Activated CD4-positive, alpha-beta memory T cell treated with anti-CD3 and anti-CD28 coated beads, Interleukin-2, amount 10 ng/mL, durations not matched to agents 7 days and 5 days (primary cell): ENCODE measurements at regions of chr19 and their contacts with region 1.

Region 1: DNA sequence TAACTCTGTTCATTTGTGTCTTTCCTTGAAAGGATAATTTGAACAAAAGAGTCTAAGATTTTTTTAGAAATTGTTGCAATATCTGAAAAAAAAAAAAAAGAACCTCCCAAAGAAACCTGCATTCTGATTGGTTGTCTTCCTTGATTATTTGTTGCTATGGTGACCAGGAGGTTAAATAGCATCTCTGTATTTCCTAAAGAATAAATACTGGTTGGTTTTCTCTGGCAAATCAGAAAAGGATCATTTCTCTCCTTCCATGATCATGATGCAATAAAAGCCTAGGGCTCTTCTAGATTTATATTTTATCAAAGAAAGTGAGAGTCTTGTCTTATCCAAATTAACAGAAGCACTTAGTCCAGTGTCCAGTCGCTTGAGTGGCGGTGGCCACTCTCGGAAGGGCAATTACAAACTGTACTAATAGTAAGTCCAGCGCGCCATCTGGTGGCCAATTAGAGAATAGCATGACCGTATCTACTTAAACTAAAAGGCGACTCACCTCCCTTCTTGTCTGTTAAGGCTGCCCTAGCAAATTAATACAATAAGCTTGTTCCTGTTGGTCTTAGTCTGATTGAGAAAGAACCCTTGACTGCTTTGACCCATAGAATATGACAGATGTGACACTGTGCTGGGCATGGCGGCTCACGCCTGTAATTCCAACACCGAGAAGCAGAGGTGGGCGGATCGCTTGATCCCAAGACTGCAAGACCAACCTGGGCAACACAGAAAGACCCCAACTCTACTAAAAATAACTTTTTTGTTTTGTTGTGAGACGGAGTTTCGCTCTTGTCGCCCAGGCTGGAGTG is 47.0 kb upstream of the PNMA8B start:
- DNase-seq: peak; percentile 82
- H3K4me3 Mint-ChIP-seq: no peak overlapping the region
- H3K27ac Mint-ChIP-seq: no peak overlapping the region
- H3K4me1 Mint-ChIP-seq: peaks cover 4% of the 10 kb centered on the region
- H3K27me3 Mint-ChIP-seq: peaks cover 13% of the 10 kb centered on the region

Region 2: DNA sequence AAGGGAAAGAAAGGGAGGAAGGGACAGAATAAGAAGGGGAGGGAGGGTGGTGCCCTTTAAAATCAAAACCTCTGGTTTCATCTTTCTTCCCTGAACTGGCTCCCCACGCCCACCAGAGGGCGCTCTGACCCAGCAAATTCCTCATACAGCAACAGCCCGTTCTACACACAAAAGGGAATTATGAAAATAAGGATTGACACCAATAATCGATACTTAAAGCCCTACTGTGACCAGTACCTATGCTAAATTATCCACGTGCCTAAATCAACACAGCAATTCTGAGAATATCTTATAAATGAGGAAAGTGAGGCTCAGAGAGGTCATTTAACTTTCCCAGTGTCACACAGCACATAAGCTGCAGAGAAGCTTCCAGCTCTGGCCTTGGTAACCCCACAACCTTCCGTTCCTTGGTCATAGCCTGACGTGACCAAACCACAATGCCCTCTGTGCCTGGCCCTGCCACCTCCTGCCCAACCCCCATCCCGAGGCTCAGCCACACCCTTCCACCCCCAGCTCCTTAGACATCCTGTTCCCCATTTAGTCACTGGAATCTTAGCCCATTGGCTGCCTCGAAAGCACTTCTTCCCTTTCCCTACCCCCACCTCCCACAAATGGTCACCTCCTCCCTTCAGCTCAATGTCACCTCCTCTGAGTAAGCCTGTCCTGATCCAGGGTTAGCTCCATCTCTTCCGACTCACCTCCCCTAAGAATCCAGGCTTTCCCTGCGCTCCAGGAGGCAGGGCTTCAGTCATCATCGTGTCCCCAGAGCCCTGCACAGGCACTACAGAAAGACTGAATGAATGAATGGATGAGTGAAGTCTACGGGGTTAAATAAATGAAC is 12.8 kb before region 1 on chr19:
- CTCF ChIA-PET with region 1: interaction called, 27 read pairs
- POLR2A ChIA-PET with region 1: no interaction called
- DNase-seq: peak; percentile 75
- H3K4me3 Mint-ChIP-seq: no peak overlapping the region
- H3K27ac Mint-ChIP-seq: peak overlapping the region; percentile 8
- H3K4me1 Mint-ChIP-seq: peaks cover 17% of the 10 kb centered on the region
- H3K27me3 Mint-ChIP-seq: no peaks in the 10 kb centered on the region

Region 3: GRCh38 chr19:46600384-46601317 is 58.0 kb after region 1 on chr19:
- CTCF ChIA-PET with region 1: interaction called, 4 read pairs
- POLR2A ChIA-PET with region 1: interaction called, 10 read pairs
- DNase-seq: peak; percentile 97
- H3K4me3 Mint-ChIP-seq: peak overlapping the region; percentile 100
- H3K27ac Mint-ChIP-seq: peak overlapping the region; percentile 100
- H3K4me1 Mint-ChIP-seq: peaks cover 38% of the 10 kb centered on the region
- H3K27me3 Mint-ChIP-seq: peaks cover 12% of the 10 kb centered on the region